Activated T-helper 2 cell treated with anti-CD3 and anti-CD28 coated beads, Interferon-gamma antibody, Interleukin-2, Interleukin-4, amounts not matched to agents 10 μg/mL and 5 μg/mL and 100 μg/mL, durations not matched to agents 14 hours and 24 hours and 36 hours (primary cell): ENCODE measurements at regions of chr19 and their contacts with region 1.

Region 1: GRCh38 chr19:860481-861101 is 1.1 kb downstream of the CFD start:
- DNase-seq: peak; percentile 51
- H3K4me3 Mint-ChIP-seq: peak overlapping the region; percentile 17
- H3K27ac Mint-ChIP-seq: no peak overlapping the region
- H3K4me1 Mint-ChIP-seq: peaks cover 9% of the 10 kb centered on the region
- H3K27me3 Mint-ChIP-seq: peaks cover 6% of the 10 kb centered on the region

Region 2: DNA sequence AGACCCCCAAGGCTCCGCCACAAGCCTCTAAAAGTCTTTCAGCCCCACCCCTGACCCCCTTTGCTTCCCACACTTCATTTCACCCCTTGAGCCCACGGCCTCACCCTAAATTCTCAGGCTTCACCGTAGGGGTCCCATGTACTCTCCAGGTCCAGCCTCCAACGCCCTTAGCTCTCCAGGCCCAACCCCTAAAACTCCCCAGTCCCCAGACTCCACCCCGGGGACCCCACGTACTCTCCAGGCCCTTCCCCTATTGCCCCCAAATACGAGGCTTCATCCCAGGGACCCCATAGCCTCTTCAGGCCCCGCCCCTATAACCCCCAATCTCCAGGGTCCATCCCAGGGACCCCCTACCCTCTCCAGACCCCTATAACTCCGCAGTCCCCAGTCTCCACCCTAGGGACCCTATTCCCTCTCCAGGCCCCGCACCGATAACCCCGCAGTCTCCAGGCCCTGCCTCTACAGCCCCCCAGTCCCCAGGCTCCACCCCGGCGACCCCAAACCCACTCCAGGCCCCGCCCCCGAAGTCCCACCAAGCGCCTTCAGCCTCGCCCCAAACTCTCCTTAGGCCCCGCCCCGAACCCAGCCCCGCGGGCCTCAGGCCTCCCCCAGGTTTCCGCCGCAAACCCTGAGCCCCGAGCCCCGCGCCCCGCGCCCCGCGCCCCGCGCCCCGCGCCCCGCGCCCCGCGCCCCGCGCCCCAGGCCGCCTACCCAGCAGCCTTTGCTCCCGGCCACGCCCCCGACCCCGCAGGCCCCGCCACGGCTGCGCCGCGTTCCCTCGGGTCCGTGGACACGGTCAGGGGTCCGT is 31.9 kb after region 1 on chr19:
- intact Hi-C with region 1: loop called (anchors 2 kb)
- DNase-seq: no peak
- H3K4me3 Mint-ChIP-seq: peak overlapping the region; percentile 90
- H3K27ac Mint-ChIP-seq: peak overlapping the region; percentile 81
- H3K4me1 Mint-ChIP-seq: peaks cover 8% of the 10 kb centered on the region
- H3K27me3 Mint-ChIP-seq: no peaks in the 10 kb centered on the region

Region 3: GRCh38 chr19:920051-920864 is 59.7 kb after region 1 on chr19:
- intact Hi-C with region 1: loop called (anchors 2 kb)
- DNase-seq: peak; percentile 60
- H3K4me3 Mint-ChIP-seq: peak overlapping the region; percentile 78
- H3K27ac Mint-ChIP-seq: peak overlapping the region; percentile 87
- H3K4me1 Mint-ChIP-seq: peaks cover 14% of the 10 kb centered on the region
- H3K27me3 Mint-ChIP-seq: peaks cover 4% of the 10 kb centered on the region